Esophagus muscularis mucosa (tissue), 4 donors: ENCODE measurements at regions of chr14 and their contacts with region 1.

Region 1: DNA sequence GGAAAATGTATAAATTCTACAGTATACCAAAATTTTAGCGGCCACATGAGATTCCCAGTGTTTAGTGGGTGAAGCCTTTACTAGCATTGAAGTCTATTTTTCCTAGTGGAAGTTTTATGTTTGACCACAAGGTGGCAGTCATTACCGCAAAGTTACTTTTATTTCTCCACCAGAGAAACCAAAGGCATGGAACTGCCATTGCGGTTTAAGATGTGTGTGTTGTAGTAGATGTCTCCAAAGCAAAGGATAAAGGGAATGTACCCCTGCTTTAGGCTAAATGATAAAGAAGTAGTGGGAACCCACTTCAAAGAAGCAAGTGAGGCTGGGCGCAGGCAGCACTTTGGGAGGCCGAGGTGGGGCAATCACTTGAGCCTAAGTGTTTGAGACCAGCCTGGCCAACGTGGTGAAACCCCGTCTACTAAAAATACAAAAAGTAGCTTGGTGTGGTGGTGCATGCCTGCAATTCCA is 140.5 kb downstream of the PRKCH start:
- DNase-seq: peak; percentile 91
- H3K4me3 ChIP-seq: no peak overlapping the region
- H3K27ac ChIP-seq: no peak overlapping the region
- H3K4me1 ChIP-seq: peaks cover 13 to 27% (median 17%) of the 10 kb centered on the region in 4 donors
- H3K27me3 ChIP-seq: no peaks in the 10 kb centered on the region
- CTCF ChIP-seq: peak; percentile 75 to 84 (median 81)
- EP300 ChIP-seq: no peak
- POLR2A ChIP-seq: no peak

Region 2: DNA sequence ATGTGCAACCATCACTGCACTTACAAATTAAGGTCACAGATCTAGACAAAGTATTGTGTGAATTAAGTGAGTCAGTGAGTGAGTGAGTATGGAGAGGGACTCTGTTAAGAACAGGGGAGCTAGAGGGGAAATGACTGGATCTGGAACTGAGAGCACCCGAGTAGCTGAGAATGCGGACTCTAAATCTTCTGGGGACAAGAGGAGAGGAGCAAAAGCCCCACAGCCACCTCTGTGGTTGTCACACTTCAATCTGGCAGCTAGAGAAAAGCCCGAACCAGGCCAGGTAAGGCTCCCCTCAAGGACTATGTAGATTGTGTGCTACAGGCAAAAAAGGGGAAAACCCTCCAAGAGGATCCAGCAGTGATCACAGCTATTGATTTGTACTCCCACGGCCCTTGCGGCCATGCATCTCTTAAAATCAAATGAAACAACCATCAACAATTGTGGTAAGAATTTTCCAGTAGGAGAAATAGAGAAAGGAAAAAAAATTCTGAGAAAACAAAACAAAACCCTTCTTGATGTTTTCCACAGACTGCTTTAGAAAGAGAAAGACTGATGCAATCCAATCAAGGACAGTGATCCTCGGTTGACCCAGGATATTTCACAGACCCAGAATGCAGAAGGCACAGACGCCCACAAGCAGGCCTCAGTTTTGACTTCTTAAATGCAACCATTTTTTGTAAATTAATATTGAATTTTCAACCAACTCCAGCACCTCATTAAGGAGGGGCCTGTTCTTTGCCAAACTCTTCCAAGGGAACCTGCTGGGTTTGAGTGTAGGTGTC is 371.2 kb before region 1 on chr14:
- intact Hi-C with region 1: no loop called
- DNase-seq: no peak
- H3K4me3 ChIP-seq: no peak overlapping the region
- H3K27ac ChIP-seq: no peak overlapping the region
- H3K4me1 ChIP-seq: no peaks in the 10 kb centered on the region
- H3K27me3 ChIP-seq: no peaks in the 10 kb centered on the region
- CTCF ChIP-seq: no peak
- EP300 ChIP-seq: no peak
- POLR2A ChIP-seq: no peak

Region 3: DNA sequence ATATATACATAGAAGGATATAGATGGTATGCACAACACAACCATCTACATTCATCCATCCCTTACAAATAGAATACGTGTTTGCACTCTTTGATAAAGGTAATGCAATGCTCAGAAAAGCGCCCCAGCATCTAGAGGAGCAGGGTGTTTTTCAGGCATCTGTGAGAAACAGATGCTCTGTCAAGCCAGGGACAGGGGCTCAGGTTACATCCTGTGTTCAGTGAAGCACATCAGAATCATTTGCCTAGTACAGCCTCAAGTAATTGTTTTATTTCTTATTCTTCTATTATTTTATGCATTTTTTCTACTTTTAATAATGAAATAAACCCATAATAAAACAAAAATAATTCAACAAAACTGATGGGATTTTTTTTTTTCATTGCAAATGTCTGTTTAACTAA is 183.0 kb after region 1 on chr14:
- intact Hi-C with region 1: no loop called
- DNase-seq: no peak
- H3K4me3 ChIP-seq: no peak overlapping the region
- H3K27ac ChIP-seq: no peak overlapping the region
- H3K4me1 ChIP-seq: peaks cover 10 to 17% (median 10%) of the 10 kb centered on the region in 4 donors
- H3K27me3 ChIP-seq: no peaks in the 10 kb centered on the region
- CTCF ChIP-seq: no peak
- EP300 ChIP-seq: no peak
- POLR2A ChIP-seq: no peak

Region 4: DNA sequence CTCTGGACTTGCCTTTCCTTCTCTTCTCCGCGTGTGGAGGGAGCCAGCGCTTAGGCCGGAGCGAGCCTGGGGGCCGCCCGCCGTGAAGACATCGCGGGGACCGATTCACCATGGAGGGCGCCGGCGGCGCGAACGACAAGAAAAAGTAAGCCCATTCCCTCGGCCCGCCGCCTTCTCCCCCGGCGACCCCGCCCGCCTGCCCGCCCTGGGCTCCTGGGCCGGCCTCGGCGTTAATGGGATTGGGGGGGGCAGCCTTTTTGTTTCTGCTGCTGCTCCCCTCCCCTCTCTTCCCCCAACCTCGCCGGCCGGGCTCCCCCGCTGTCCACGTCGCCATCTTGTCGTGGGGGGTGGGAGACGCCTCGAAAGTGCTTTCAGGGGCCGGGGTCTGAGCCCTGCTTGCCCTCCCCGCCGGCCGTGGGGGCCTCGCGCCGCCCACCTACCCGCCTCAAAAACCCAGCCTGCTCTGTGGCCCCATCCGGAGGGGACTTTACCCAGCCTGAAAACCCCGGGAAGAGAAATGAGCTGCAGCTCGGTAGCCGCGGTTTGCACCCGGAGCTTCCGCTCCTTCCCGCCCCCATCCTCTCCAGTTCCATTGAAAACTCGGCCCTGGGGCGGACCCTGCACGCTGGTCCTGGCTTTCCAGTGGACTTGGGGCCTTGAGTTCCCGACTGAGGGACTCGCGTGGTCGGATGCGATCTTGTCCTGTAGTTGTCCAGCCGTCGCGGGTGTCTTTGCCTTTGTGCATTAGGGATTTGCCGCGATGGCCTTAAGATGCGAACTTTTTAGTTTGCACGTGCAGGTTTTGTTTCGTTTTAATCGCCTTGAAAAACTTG is 234.1 kb after region 1 on chr14:
- intact Hi-C with region 1: no loop called
- DNase-seq: peak; percentile 92
- H3K4me3 ChIP-seq: peak overlapping the region; percentile 77 to 98 (median 88)
- H3K27ac ChIP-seq: peak overlapping the region; percentile 88 to 100 (median 96)
- H3K4me1 ChIP-seq: peaks cover 15 to 49% (median 45%) of the 10 kb centered on the region in 4 donors
- H3K27me3 ChIP-seq: no peaks in the 10 kb centered on the region
- CTCF ChIP-seq: no peak
- EP300 ChIP-seq: no peak
- POLR2A ChIP-seq: no peak

Region 5: DNA sequence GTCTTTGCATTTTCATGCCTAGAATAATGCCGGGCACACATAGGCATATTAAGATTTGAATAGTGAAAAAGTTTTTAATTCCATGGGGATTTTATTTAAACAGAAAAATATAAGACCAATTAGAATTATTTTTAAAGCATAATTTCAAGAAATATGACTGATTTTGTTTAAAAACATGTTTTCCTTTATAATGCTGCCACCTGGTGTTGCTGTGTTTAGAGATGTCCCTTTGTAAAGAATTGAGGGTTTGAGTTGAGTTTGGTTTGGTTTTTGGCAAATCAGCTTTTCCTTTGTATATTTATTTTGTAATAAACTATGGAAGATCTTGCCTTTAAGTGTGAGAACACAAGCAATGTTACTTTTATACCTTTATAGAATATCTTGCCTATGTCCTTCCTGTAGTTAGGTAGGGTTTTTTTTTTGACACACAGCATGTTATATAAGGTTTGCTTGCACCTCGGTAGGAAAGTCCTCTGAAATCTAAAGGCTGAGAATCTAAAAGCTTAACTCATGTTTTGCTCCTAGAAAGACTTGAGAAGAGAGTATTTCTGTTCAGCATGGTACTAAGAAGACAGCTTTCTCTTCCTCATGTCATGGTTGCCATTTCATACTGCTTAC is 269.0 kb after region 1 on chr14:
- intact Hi-C with region 1: loop called (anchors 2 kb)
- DNase-seq: no peak
- H3K4me3 ChIP-seq: no peak overlapping the region
- H3K27ac ChIP-seq: peak overlapping the region in 3 of 4 donors; percentile 1 to 38 (median 17)
- H3K4me1 ChIP-seq: peaks cover 0 to 18% (median 10%) of the 10 kb centered on the region in 4 donors
- H3K27me3 ChIP-seq: no peaks in the 10 kb centered on the region
- CTCF ChIP-seq: peak; percentile 45 to 66 (median 58)
- EP300 ChIP-seq: no peak
- POLR2A ChIP-seq: no peak